CD4-positive, alpha-beta memory T cell (primary cell): ENCODE measurements at regions of chr2 and their contacts with region 1.

Region 1: DNA sequence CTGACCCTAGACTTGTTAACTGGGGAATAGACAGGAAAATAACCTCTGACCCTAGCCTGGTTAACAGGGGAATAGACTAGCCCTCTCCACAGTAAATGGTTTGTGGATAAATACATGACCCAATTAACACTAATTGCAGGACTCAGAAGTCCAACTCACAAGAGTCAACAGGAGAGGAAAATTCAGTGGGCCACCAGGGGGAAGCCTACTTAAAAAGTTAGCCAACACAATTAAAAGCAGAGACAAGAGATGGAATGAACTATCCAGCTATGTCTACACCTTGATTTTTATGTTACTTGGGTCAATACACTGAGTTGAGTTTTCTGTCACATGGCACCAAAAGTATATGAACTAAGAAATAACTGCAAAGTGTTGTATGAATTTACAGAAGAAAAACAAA is 158.8 kb upstream of the SLC39A10 start:
- DNase-seq: peak; percentile 52 to 66 (median 60)
- H3K4me3 ChIP-seq: no peak overlapping the region
- H3K4me3 Mint-ChIP-seq: peak overlapping the region in 2 of 8 donors; percentile 10 to 22
- H3K27ac ChIP-seq: no peak overlapping the region
- H3K27ac Mint-ChIP-seq: peak overlapping the region in 3 of 7 donors; percentile 2 to 70 (median 19)
- H3K4me1 ChIP-seq: peaks cover 12% of the 10 kb centered on the region
- H3K4me1 Mint-ChIP-seq: peaks cover 18 to 41% (median 31%) of the 10 kb centered on the region in 4 donors
- H3K27me3 ChIP-seq: no peaks in the 10 kb centered on the region
- H3K27me3 Mint-ChIP-seq: no peaks in the 10 kb centered on the region

Region 2: DNA sequence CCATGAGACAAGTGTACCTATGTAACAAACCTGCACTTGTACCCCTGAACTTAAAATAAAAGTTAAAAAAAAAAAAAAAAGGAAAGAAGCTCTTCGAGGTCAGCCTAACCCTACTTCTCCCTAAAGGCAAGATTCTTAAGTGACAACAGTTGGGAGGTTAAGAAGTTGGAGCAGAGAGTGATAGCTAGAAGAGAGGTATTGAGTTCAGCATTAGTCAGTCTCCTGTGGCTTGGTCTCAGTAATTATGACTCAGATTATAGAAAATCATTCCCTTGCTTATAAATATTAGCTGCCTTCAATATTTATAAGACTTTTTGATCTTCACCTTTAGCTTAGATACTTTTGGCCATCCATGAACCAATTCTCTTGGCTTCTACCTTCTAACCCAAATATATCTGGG is 767.9 kb before region 1 on chr2:
- CTCF ChIA-PET with region 1: no interaction called
- POLR2A ChIA-PET with region 1: no interaction called
- intact Hi-C with region 1: no loop called
- DNase-seq: no peak
- H3K4me3 ChIP-seq: no peak overlapping the region
- H3K4me3 Mint-ChIP-seq: no peak overlapping the region
- H3K27ac ChIP-seq: no peak overlapping the region
- H3K27ac Mint-ChIP-seq: no peak overlapping the region
- H3K4me1 ChIP-seq: no peaks in the 10 kb centered on the region
- H3K4me1 Mint-ChIP-seq: no peaks in the 10 kb centered on the region
- H3K27me3 ChIP-seq: no peaks in the 10 kb centered on the region
- H3K27me3 Mint-ChIP-seq: no peaks in the 10 kb centered on the region

Region 3: GRCh38 chr2:195513119-195513518 is 14.9 kb after region 1 on chr2:
- CTCF ChIA-PET with region 1: interaction called, 40 read pairs
- POLR2A ChIA-PET with region 1: interaction called, 5 read pairs
- intact Hi-C with region 1: no loop called
- DNase-seq: no peak
- H3K4me3 ChIP-seq: no peak overlapping the region
- H3K4me3 Mint-ChIP-seq: no peak overlapping the region
- H3K27ac ChIP-seq: no peak overlapping the region
- H3K27ac Mint-ChIP-seq: no peak overlapping the region
- H3K4me1 ChIP-seq: no peaks in the 10 kb centered on the region
- H3K4me1 Mint-ChIP-seq: peaks cover 0 to 12% (median 8%) of the 10 kb centered on the region in 4 donors
- H3K27me3 ChIP-seq: no peaks in the 10 kb centered on the region
- H3K27me3 Mint-ChIP-seq: no peaks in the 10 kb centered on the region

Region 4: DNA sequence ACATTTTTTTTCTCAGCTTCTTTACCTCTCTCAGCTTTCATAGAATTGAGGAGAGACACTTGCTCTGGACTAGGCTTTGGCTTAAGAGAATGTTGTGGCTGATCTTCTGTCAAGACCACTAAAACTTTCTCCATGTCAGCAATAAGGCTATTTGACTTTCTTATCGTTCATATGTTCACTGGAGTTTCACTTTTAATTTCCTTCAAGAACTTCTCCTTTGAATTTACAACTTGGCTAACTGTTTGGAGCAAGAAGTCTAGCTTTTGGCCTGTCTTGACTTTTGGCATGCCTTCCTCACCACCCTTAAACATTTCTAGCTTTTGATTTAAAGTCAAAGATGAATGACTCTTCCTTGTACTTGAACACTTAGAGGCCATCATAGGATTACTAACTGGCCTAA is 54.4 kb after region 1 on chr2:
- CTCF ChIA-PET with region 1: interaction called, 19 read pairs
- POLR2A ChIA-PET with region 1: no interaction called
- intact Hi-C with region 1: no loop called
- DNase-seq: no peak
- H3K4me3 ChIP-seq: peak overlapping the region in 1 of 2 donors; percentile 28
- H3K4me3 Mint-ChIP-seq: peak overlapping the region in 7 of 8 donors; percentile 57 to 83 (median 80)
- H3K27ac ChIP-seq: no peak overlapping the region
- H3K27ac Mint-ChIP-seq: peak overlapping the region; percentile 10 to 84 (median 66)
- H3K4me1 ChIP-seq: peaks cover 45% of the 10 kb centered on the region
- H3K4me1 Mint-ChIP-seq: peaks cover 26 to 64% (median 45%) of the 10 kb centered on the region in 4 donors
- H3K27me3 ChIP-seq: no peaks in the 10 kb centered on the region
- H3K27me3 Mint-ChIP-seq: no peaks in the 10 kb centered on the region

Region 5: GRCh38 chr2:195575879-195576401 is 77.8 kb after region 1 on chr2:
- CTCF ChIA-PET with region 1: interaction called, 61 read pairs
- POLR2A ChIA-PET with region 1: no interaction called
- intact Hi-C with region 1: loop called (anchors 2 kb)
- DNase-seq: no peak
- H3K4me3 ChIP-seq: no peak overlapping the region
- H3K4me3 Mint-ChIP-seq: peak overlapping the region in 7 of 8 donors; percentile 25 to 70 (median 57)
- H3K27ac ChIP-seq: no peak overlapping the region
- H3K27ac Mint-ChIP-seq: peak overlapping the region in 6 of 7 donors; percentile 36 to 93 (median 90)
- H3K4me1 ChIP-seq: peaks cover 47% of the 10 kb centered on the region
- H3K4me1 Mint-ChIP-seq: peaks cover 35 to 64% (median 52%) of the 10 kb centered on the region in 4 donors
- H3K27me3 ChIP-seq: no peaks in the 10 kb centered on the region
- H3K27me3 Mint-ChIP-seq: no peaks in the 10 kb centered on the region

Region 6: DNA sequence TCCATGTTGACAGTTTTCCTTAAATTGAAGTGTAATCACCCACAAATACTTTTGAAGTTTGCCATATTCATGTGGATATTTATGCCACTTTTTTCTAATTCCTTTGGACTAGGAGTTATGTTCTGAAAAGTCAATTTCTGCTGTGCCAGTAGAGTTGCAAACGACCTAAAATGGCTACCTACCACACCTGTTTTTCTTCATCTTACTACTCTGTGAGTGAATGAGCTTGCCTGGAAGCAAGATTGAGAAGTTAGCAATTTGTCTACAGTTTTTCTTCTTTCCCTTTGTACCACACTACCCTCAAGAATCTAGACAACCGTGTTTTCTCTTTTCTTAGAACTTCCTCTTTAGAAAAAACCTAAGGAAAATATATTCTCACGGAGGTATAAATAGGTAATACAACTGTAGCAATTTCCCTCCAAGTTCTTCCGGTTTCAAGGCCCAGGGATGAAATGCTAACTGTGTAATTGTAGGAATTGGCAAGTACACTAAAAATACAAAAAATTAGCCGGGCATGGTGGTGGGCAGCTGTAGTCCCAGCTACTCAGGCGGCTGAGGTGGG is 151.5 kb after region 1 on chr2:
- CTCF ChIA-PET with region 1: interaction called, 10 read pairs
- POLR2A ChIA-PET with region 1: no interaction called
- intact Hi-C with region 1: no loop called
- DNase-seq: no peak
- H3K4me3 ChIP-seq: no peak overlapping the region
- H3K4me3 Mint-ChIP-seq: no peak overlapping the region
- H3K27ac ChIP-seq: no peak overlapping the region
- H3K27ac Mint-ChIP-seq: no peak overlapping the region
- H3K4me1 ChIP-seq: no peaks in the 10 kb centered on the region
- H3K4me1 Mint-ChIP-seq: peaks cover 5 to 9% (median 6%) of the 10 kb centered on the region in 4 donors
- H3K27me3 ChIP-seq: no peaks in the 10 kb centered on the region
- H3K27me3 Mint-ChIP-seq: no peaks in the 10 kb centered on the region

Region 7: DNA sequence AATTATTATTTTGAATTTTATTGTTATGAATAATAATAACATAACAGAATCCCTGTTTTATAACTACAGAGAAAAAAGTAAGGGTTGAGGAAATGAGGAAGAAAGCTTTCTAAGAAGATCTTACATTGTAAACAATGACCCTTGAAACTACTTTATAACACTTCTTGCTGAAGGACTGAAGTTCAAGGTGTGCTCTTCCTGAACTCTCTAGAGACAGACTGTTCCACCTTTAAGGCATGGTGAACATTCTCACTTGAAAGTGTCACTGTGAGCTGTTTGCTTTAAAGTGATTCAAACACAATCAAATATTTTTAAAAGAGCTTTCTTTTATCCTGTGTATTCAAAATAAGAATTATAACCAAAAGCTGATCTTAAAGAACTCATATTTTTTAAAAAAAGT is 439.0 kb after region 1 on chr2:
- CTCF ChIA-PET with region 1: no interaction called
- POLR2A ChIA-PET with region 1: no interaction called
- intact Hi-C with region 1: loop called (anchors 2 kb)
- DNase-seq: no peak
- H3K4me3 ChIP-seq: no peak overlapping the region
- H3K4me3 Mint-ChIP-seq: no peak overlapping the region
- H3K27ac ChIP-seq: no peak overlapping the region
- H3K27ac Mint-ChIP-seq: no peak overlapping the region
- H3K4me1 ChIP-seq: no peaks in the 10 kb centered on the region
- H3K4me1 Mint-ChIP-seq: no peaks in the 10 kb centered on the region
- H3K27me3 ChIP-seq: no peaks in the 10 kb centered on the region
- H3K27me3 Mint-ChIP-seq: peaks cover 0 to 6% of the 10 kb centered on the region in 2 donors